CD4-positive, alpha-beta memory T cell (primary cell): ENCODE measurements at regions of chr2 and their contacts with region 1.

Region 1: DNA sequence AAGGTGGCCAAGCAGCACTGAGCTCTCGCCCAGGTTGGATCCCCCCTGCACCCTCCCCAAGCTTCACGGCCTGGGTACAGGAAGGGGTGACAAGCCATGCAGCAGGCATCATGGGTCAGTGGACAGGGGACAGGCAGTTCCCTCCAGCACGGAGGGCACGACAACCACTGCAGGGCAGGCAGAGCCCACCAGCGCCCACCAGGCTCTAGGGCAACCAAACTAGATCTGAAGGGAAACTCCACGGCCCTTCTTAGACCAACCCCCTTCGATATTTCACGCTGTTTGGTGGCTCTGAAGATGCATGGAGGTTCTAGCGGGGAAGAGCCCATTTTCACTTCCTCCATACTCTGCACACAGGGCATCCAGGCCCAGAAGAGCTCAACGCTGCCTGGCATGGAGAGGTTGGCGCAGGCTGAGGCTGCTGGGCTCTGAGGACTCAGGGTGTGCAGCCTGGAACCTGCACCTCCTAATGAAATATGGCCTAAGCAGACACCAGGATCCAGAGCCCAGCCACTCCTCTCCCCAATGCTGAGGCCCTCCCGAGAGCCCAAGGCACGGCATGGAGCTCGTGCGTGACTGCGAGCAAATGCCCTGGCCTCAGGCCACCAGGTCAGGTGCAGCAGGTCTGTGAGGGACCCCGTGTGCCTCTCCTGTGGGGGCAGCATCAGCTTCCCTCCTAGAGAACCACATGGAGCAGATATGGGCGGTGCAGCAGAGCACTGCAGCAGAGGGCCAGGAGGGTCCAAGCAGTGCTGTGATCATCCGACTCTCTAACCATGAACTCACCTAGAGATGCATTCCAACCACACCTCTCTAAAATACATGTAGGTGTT is 8.7 kb upstream of the MTERF4 start:
- DNase-seq: peak in 1 of 5 donors; percentile 33
- H3K4me3 ChIP-seq: peak overlapping the region; percentile 48 to 51
- H3K4me3 Mint-ChIP-seq: peak overlapping the region; percentile 89 to 98 (median 93)
- H3K27ac ChIP-seq: peak overlapping the region; percentile 64
- H3K27ac Mint-ChIP-seq: peak overlapping the region; percentile 93 to 99 (median 97)
- H3K4me1 ChIP-seq: peaks cover 60% of the 10 kb centered on the region
- H3K4me1 Mint-ChIP-seq: peaks cover 35 to 69% (median 53%) of the 10 kb centered on the region in 4 donors
- H3K27me3 ChIP-seq: no peaks in the 10 kb centered on the region
- H3K27me3 Mint-ChIP-seq: no peaks in the 10 kb centered on the region

Region 2: DNA sequence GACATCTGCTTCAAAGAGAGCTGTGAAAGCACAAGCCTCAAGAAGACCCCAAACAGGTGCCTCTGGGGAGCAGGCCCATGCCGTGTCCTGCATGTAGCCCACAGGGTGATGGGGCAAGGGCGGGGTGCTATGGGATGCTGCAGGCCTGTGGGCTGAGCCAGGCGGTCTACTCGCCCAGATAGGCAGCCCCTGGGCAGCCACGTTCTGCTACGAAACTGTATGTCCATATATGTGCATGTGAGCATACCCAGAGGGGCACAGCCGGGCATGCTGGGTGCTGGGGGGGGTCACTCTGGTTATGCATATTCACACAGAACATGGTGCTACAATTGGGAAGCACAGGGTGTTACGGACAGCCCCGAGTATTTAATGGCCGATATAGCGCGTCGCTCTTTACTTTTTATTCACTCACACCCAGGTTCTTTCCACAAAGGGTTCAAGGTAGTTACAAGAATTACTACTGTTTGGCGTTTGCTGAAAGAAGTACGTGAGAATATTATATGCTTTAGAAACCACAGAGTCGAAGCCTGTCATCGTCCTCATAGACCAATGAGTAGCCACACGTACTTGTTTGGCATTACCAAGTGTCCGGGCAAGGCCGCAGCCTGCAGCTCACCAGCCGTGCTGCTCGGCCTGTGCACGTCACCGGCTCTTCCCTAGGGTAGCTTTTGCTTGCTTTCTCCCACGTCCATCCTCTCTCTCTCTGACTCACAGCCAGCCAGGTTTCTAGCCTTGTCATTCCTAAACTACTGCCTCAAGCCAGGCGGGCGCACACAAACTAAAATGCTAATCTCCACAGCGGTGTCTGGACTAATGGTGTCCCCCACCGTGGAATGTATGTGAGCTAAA is 23.2 kb before region 1 on chr2:
- CTCF ChIA-PET with region 1: no interaction called
- POLR2A ChIA-PET with region 1: interaction called, 231 read pairs
- intact Hi-C with region 1: no loop called
- DNase-seq: no peak
- H3K4me3 ChIP-seq: no peak overlapping the region
- H3K4me3 Mint-ChIP-seq: peak overlapping the region in 1 of 8 donors; percentile 0
- H3K27ac ChIP-seq: no peak overlapping the region
- H3K27ac Mint-ChIP-seq: peak overlapping the region in 2 of 7 donors; percentile 2 to 37
- H3K4me1 ChIP-seq: no peaks in the 10 kb centered on the region
- H3K4me1 Mint-ChIP-seq: peaks cover 14 to 18% (median 15%) of the 10 kb centered on the region in 4 donors
- H3K27me3 ChIP-seq: no peaks in the 10 kb centered on the region
- H3K27me3 Mint-ChIP-seq: no peaks in the 10 kb centered on the region

Region 3: GRCh38 chr2:241142593-241142992 is 31.8 kb after region 1 on chr2:
- CTCF ChIA-PET with region 1: no interaction called
- POLR2A ChIA-PET with region 1: interaction called, 299 read pairs
- intact Hi-C with region 1: no loop called
- DNase-seq: no peak
- H3K4me3 ChIP-seq: no peak overlapping the region
- H3K4me3 Mint-ChIP-seq: no peak overlapping the region
- H3K27ac ChIP-seq: no peak overlapping the region
- H3K27ac Mint-ChIP-seq: no peak overlapping the region
- H3K4me1 ChIP-seq: peaks cover under 1% of the 10 kb centered on the region
- H3K4me1 Mint-ChIP-seq: peaks cover 5 to 21% (median 12%) of the 10 kb centered on the region in 4 donors
- H3K27me3 ChIP-seq: no peaks in the 10 kb centered on the region
- H3K27me3 Mint-ChIP-seq: no peaks in the 10 kb centered on the region